RWPE1 (cell line): ENCODE measurements at regions of chr16 and their contacts with region 1.

Region 1: DNA sequence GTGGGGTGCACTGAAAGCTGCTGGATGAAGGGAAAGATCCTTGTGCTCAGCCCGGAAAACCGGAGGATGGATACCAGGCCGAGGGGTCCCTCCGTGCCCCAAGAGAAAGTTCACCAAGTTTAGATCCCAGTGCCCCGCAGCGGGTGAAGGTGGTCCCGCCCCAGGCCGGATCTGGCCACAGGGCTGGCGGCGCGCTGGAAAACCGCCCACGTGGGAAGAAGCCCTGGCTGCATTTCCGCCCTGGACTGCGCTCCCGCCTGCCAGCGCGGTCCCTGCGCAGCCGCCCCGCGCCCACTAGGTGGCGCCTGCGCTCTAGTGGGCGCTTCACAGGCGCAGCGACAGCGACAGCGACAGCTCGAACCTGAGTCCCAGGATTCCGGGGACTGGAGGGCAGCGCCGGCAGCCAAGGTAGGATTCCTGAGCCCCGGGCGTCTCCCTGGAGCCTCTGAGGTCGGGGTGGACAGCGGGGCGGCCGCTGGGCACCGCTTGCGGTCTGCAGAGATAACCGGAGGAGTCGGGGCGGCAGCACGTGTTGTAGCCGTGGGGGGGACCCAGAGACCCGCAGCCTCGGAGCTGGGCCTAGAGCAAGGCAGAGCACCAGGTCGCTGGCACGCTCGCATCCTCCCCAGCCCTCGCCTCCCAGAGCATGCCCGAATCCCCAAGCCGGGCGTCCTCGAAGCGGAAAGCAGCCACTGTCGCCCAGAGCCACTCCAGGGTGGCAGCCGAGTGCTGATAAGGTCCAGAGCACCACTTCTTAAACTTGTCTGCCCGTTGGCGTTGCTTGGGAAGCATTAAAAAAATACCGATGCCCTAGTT is at the start of gene CHD9:
- DNase-seq: peak; percentile 78
- H3K27ac ChIP-seq: peak within 1 kb of the TSS; percentile 95
- CTCF ChIP-seq: peak; percentile 98

Region 2: GRCh38 chr16:53080345-53081031 is 25.6 kb after region 1 on chr16:
- CTCF ChIA-PET with region 1: interaction called, 17 read pairs
- POLR2A ChIA-PET with region 1: no interaction called
- DNase-seq: peak; percentile 96
- H3K27ac ChIP-seq: peak overlapping the region; percentile 91
- CTCF ChIP-seq: no peak

Region 3: DNA sequence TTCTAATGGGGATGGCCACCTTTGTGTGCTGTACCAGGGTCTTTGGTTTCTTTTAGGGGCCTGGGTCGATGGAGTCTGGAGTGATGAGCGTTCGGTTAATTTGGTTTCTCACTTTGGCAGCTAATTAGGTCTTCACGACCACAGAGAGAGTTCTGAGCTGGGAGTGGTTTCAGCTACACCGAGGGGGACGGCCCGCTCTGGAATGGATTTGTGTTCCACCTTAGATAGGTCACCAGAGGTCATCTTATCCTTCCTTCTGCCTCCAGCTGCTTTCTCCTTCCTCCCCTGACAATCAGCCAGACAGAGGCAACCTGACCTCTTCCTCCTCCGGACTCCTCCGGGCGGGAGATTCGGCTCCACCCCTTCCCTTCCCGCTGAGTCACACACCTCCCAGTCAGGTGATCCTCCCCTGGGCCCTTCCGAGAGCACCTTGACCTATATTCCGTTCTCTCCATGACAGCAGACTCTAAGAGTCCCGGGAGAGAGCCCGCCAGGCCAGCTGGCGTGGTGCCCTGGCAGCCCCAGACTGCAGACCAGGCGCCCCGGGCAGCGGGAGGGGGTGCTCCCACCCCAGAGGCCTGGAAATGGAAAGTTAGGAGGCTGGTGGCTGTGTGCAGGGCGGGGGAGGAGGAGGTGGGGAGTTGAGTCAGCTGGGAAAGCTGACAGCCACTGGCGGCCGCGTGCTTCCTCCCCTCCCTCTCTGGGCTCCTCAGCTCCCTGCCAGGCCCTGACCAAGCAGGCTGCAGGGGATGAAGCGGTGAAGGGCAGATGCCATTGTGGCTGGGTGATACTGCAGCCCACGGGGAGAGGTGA is 44.6 kb after region 1 on chr16:
- CTCF ChIA-PET with region 1: interaction called, 15 read pairs
- POLR2A ChIA-PET with region 1: interaction called, 3 read pairs
- DNase-seq: peak; percentile 93
- H3K27ac ChIP-seq: peak overlapping the region; percentile 99
- CTCF ChIP-seq: no peak